Activated T-helper 2 cell treated with anti-CD3 and anti-CD28 coated beads, Interferon-gamma antibody, Interleukin-2, Interleukin-4, amounts not matched to agents 10 μg/mL and 5 μg/mL and 100 μg/mL, durations not matched to agents 14 hours and 24 hours and 36 hours (primary cell): ENCODE measurements at regions of chr20 and their contacts with region 1.

Region 1: GRCh38 chr20:44866703-44867335 is 18.7 kb upstream of the YWHAB start:
- DNase-seq: no peak
- H3K4me3 Mint-ChIP-seq: peak overlapping the region; percentile 40
- H3K27ac Mint-ChIP-seq: no peak overlapping the region
- H3K4me1 Mint-ChIP-seq: peaks cover 5% of the 10 kb centered on the region
- H3K27me3 Mint-ChIP-seq: peaks cover 21% of the 10 kb centered on the region

Region 2: DNA sequence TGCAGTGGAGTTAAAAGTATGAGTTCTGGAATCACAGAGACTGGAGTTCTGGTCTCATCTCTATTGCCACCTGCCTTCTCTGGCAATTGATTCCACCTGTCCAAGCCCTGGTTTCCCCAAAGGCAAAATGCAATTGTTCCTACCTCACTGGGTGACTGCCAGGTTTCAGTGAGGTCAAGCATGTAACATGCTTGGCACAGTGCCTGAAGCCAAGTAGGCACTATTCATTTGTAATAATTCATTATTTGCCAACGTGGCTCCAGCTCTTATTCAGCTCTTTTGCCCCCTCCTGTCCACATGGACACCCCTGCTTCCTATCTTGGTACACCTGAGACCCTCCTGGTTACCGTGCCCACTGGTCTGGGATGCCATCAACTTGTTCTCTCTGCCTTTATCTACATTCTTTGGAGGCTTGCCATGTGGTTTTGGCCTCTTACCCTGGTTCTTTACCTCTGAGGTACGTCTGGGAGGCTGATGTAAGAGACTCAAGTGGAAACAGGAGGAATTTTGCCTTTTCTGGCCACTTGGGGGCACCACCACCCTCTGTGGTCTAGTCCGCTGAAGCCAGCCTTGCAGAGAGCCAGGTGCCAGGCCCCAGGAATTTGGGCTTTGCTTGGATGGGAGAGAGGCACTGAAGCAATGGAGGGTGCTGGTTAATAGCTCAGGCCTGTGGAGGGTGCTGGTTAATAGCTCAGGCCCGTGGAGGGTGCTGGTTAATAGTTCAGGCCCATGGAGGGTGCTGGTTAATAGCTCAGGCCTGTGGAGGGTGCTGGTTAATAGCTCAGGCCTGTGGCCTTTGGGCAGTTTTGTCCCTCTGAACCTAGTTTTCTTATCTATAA is 119.4 kb before region 1 on chr20:
- intact Hi-C with region 1: loop called (anchors 1 kb)
- DNase-seq: peak; percentile 32
- H3K4me3 Mint-ChIP-seq: peak overlapping the region; percentile 47
- H3K27ac Mint-ChIP-seq: no peak overlapping the region
- H3K4me1 Mint-ChIP-seq: peaks cover 3% of the 10 kb centered on the region
- H3K27me3 Mint-ChIP-seq: peaks cover 30% of the 10 kb centered on the region

Region 3: GRCh38 chr20:44885392-44886265 is 18.8 kb after region 1 on chr20 and contains the start of gene YWHAB:
- intact Hi-C with region 1: no loop called
- DNase-seq: peak; percentile 97
- H3K4me3 Mint-ChIP-seq: peak within 1 kb of the TSS; percentile 97
- H3K27ac Mint-ChIP-seq: peak within 1 kb of the TSS; percentile 91
- H3K4me1 Mint-ChIP-seq: peaks cover 48% of the 10 kb centered on the region
- H3K27me3 Mint-ChIP-seq: peaks cover 1% of the 10 kb centered on the region
- total RNA-seq, gene YWHAB: 221 and 225 TPM in 2 replicates

Region 4: DNA sequence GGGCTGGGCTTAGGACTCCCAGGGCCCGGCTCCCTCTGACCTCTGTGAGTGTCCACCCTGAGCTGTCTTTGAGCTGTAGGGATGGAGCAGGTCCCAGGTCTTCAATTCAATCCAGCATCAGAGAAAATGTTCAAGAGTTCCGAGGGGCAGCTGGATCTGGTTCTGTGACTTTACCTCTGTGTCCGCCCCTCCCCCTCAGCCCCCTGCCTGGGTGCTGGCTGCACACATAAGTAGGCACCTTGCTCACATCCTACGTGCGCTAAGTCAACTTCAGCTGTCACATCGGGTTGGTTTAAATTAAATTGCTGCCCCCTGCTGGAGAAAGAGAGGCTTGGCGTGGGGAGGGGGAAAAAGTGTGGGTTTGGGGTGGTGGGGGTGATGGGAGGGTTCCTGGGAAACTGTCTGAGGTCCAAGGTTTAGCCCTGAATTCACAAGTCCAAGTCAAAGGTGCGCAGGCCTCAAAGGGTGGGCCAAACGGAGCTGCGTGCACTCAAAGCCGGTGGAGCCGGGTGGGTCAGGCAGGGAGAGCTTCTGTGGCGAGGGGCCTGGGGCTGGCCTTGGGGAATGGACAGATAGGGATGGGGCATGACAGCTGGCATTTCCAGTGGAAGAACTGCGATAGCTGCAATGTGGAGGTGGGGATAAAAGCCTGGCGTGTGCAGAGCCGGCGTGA is 245.1 kb after region 1 on chr20:
- intact Hi-C with region 1: no loop called
- DNase-seq: no peak
- H3K4me3 Mint-ChIP-seq: no peak overlapping the region
- H3K27ac Mint-ChIP-seq: no peak overlapping the region
- H3K4me1 Mint-ChIP-seq: no peaks in the 10 kb centered on the region
- H3K27me3 Mint-ChIP-seq: peaks cover 6% of the 10 kb centered on the region